Testis (tissue), 5 donors: ENCODE measurements at regions of chr3 and their contacts with region 1.

Region 1: GRCh38 chr3:195522254-195523023 is 20.7 kb downstream of the PPP1R2 start:
- DNase-seq: no peak
- H3K4me3 ChIP-seq: no peak overlapping the region
- H3K27ac ChIP-seq: no peak overlapping the region
- H3K4me1 ChIP-seq: no peaks in the 10 kb centered on the region
- H3K27me3 ChIP-seq: no peaks in the 10 kb centered on the region
- CTCF ChIP-seq: peak; percentile 67 to 93 (median 89)
- POLR2A ChIP-seq: no peak

Region 2: GRCh38 chr3:195271116-195271858 is 251.2 kb before region 1 on chr3 and contains the start of gene XXYLT1:
- intact Hi-C with region 1: loop called (anchors 5 kb)
- DNase-seq: peak; percentile 92
- H3K4me3 ChIP-seq: peak within 1 kb of the TSS; percentile 81 to 82
- H3K27ac ChIP-seq: peak within 1 kb of the TSS; percentile 63 to 87
- H3K4me1 ChIP-seq: peaks cover 20% of the 10 kb centered on the region
- H3K27me3 ChIP-seq: no peaks in the 10 kb centered on the region
- CTCF ChIP-seq: peak; percentile 93 to 98 (median 95)
- POLR2A ChIP-seq: no peak
- total RNA-seq, gene XXYLT1: 11.1 to 12.5 TPM

Region 3: GRCh38 chr3:195403852-195404408 is 118.5 kb before region 1 on chr3:
- intact Hi-C with region 1: no loop called
- DNase-seq: no peak
- H3K4me3 ChIP-seq: no peak overlapping the region
- H3K27ac ChIP-seq: no peak overlapping the region
- H3K4me1 ChIP-seq: no peaks in the 10 kb centered on the region
- H3K27me3 ChIP-seq: no peaks in the 10 kb centered on the region
- CTCF ChIP-seq: no peak
- POLR2A ChIP-seq: no peak